ENCODE measurements at regions of chr1 and their contacts with region 1.

Region 1: DNA sequence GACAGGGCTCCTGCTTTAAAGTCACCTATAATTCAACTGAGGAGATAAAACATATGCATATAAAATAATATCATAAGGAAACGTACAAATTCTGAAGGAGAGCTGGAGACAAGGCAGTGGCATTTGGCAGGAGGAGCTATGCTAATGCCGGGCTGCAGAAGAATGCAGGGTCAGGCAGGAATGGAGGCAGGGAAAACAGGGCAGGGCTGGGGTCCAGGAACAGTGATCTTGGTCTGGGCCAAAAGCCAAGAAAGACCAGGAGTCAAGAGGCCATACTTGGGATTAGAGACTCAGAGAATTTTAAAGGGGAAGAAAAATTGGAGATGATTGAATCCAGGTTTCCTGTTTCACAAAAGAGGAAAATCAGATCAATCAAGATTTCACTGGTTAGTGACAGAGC is 20.0 kb upstream of the BRDT start:
- DNase-seq: no peak
- H3K4me3 ChIP-seq: no peak overlapping the region
- H3K27ac ChIP-seq: no peak overlapping the region
- H3K4me1 ChIP-seq: no peaks in the 10 kb centered on the region
- H3K27me3 ChIP-seq: no peaks in the 10 kb centered on the region
- CTCF ChIP-seq: no peak
- POLR2A ChIP-seq: no peak

Region 2: GRCh38 chr1:91617285-91617765 is 311.9 kb before region 1 on chr1:
- intact Hi-C with region 1: no loop called
- DNase-seq: peak in 1 of 2 donors; percentile 26
- H3K4me3 ChIP-seq: no peak overlapping the region
- H3K27ac ChIP-seq: no peak overlapping the region
- H3K4me1 ChIP-seq: no peaks in the 10 kb centered on the region
- H3K27me3 ChIP-seq: no peaks in the 10 kb centered on the region
- CTCF ChIP-seq: peak in 1 of 3 donors; percentile 27
- POLR2A ChIP-seq: no peak

Region 3: GRCh38 chr1:91856996-91857395 is 72.3 kb before region 1 on chr1:
- intact Hi-C with region 1: no loop called
- DNase-seq: no peak
- H3K4me3 ChIP-seq: no peak overlapping the region
- H3K27ac ChIP-seq: peak overlapping the region in 1 of 2 donors; percentile 52
- H3K4me1 ChIP-seq: no peaks in the 10 kb centered on the region
- H3K27me3 ChIP-seq: no peaks in the 10 kb centered on the region
- CTCF ChIP-seq: no peak
- POLR2A ChIP-seq: no peak

Region 4: GRCh38 chr1:92804721-92805169 is 875.5 kb after region 1 on chr1:
- intact Hi-C with region 1: loop called (anchors 5 kb)
- DNase-seq: no peak
- H3K4me3 ChIP-seq: peak overlapping the region in 1 of 3 donors; percentile 34
- H3K27ac ChIP-seq: no peak overlapping the region
- H3K4me1 ChIP-seq: no peaks in the 10 kb centered on the region
- H3K27me3 ChIP-seq: no peaks in the 10 kb centered on the region
- CTCF ChIP-seq: no peak
- POLR2A ChIP-seq: no peak

Measured in breast epithelium (tissue), 4 donors.